Right ventricle myocardium inferior (tissue), 1 donor: ENCODE measurements at regions of chr9 and their contacts with region 1.

Region 1: DNA sequence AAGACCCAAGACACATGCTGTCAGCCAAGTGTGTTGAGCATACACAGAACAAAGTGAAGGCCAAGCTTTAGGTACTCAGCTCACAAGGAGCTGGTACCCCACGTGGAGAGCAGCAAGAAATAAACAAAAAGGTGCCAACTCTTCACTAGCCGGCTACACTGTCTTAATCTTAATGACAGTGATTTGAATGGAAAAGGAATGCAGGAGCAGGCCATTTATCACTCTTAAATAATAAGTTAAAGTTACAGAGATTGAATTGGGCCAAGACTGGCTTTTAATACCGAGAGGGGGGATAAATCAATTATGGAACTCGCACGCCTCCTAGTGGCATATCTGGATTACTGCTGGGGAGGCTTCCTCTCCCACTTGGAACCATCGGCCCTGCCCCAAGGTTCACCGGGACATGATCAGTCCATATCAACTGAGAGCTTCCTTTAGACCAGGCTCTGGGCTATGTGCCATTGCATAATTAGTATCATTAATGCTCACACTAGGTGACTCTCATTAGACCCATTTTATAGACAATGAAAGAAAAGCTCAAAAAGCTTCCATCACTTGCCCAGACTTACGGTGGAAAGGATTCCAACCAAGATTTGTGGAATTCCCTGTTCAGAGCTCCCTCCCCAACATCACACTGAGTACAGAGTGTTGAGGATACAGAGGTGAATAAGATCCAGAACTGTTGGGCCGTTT is 94.0 kb downstream of the ACTL7B start:
- DNase-seq: peak; percentile 70
- ATAC-seq: peak; percentile 79

Region 2: DNA sequence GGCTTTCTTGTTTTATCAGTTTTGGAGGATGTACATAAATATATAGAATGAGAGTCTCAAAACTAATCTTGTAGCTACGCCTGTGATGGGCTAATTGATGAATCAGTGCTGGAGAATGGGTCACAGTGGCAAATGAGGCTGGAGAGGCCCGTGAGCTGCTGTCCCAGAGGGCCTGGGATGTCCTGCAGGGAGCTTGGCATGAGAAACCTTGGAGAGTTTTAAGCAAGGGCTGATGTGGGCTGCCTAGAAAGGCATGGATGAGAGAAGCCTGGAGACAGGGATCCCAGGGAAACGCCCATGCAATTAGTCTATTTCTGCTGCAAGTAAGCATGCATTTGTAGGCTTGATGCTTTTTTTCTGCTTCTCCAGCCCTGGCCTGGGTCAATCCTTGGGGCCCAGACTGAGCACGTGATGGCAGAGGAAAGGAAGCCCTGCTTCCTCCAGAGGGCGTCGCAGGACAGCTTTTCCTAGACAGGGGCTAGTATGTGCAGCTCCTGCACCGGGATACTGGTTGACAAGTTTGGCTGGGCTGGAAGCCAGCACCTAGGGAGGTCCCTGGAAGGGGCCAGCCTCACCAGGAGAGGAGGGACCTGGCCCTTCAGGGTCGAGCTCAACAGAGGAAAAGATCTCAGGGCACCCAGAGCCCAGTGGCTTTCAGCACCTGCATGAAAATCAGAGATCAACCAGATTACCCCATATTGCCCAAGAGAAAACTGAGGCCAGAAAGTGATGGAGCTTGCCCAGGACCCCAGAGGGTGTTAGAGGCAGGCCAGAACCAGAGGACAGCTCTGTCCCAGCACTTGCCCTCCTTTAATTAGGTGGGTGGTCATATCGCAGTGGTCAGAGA is 1339.6 kb before region 1 on chr9:
- intact Hi-C with region 1: loop called (anchors 5 kb)
- DNase-seq: peak; percentile 74
- ATAC-seq: peak; percentile 65

Region 3: GRCh38 chr9:107465467-107466451 is 1296.0 kb before region 1 on chr9:
- intact Hi-C with region 1: loop called (anchors 5 kb)
- DNase-seq: peak; percentile 91
- ATAC-seq: peak; percentile 99

Region 4: DNA sequence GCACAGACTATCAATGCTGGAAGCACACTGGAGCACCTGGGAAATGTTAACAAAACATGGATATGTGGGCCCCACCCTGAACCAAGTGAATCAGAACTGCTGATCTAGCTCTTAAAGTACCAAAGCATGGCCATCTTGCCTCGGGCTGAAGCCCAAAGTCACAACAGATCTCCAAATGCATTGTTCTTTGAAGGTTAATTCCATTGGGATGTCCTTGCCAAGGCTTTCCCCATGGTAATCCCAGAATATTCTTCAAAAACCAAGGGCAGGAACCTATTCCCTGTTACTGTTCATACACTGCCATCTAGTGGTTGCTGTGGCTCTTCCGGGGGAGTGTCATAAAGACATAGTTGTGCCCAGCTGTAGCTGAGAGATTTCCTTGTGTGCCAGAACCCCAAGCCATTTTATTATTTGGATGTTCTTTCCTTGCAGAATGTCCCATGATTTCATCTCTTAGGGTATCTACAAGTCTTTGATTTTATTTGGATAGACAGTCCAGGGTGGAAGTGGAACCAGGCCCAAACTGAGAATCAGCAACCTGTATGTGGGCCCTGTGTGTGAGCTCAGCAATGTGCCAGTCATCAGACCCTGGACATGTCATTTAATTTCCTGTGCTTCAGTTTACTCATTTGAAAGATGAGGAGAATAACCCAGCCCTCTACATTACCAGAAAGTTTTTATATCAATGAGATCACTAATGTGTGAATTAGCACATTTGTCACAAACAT is 196.0 kb before region 1 on chr9:
- intact Hi-C with region 1: loop called (anchors 5 kb)
- DNase-seq: no peak
- ATAC-seq: peak; percentile 89